Right lobe of liver (tissue), 6 donors: ENCODE measurements at regions of chr17 and their contacts with region 1.

Region 1: DNA sequence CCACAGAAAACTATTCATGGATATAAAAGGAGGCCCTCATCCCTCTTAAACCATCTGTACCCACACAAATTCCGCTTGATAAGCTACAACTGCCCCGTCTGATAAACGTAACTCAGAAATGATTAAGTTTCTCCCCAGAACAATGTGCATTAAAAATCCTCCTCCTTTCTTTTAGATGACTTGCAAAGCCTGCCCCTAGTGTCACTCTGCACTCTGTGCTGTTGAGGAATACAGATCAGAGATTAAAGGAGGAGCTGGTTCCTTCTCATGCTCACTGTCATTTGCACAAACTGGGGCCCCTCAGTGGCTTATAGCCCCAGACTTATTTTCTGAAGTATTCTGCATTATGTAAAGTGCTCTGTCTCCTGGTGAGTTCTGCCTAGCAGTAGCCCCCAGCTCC is 33.3 kb downstream of the CDRT15 start:
- DNase-seq: no peak
- ATAC-seq: no peak
- H3K4me3 ChIP-seq: no peak overlapping the region
- H3K27ac ChIP-seq: no peak overlapping the region
- H3K4me1 ChIP-seq: peaks cover 0 to 10% (median 4%) of the 10 kb centered on the region in 4 donors
- H3K27me3 ChIP-seq: no peaks in the 10 kb centered on the region
- CTCF ChIP-seq: peak in 1 of 4 donors; percentile 17
- POLR2A ChIP-seq: no peak

Region 2: DNA sequence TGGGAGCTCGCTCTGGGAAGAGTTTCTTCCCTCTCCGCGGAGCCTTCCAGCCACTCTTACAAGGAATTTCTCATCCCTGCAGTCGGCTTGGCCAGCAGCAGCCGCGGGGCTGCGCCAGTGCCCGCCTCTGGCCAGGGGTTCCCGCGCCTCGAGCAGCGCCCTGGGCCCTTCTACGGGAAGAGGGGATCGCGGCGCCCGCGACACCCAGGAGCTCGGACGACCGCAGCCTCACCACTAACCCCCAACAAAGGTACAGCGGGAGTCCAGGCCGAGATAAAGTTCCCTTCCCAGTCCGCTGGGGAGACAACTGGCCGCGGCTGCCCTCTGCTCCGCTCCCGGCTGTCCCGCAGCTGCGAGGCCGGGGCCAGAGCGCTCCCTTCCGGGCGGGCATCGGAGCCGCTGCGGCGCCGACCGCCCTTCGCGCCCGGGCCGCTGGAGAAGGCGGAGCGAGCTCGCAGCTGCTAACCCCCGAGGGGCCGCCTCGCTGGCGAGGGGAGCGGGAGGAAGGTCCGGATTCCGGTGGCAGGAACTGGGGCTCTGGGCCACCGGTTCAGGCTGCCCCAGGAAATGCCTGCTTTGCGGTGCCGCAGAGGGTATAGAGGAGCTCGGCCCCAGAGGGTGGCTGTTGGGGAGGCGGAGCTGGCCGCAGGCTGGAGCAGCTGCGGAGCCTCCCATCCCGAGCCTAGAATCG is 93.9 kb after region 1 on chr17:
- intact Hi-C with region 1: loop called in 1 of 2 experiments (anchors 10 kb)
- DNase-seq: peak; percentile 70 to 75 (median 72)
- ATAC-seq: peak; percentile 34 to 54 (median 46)
- H3K4me3 ChIP-seq: peak overlapping the region; percentile 46 to 57 (median 56)
- H3K27ac ChIP-seq: peak overlapping the region; percentile 48 to 77 (median 61)
- H3K4me1 ChIP-seq: peaks cover 0 to 4% (median 0%) of the 10 kb centered on the region in 4 donors
- H3K27me3 ChIP-seq: no peaks in the 10 kb centered on the region
- CTCF ChIP-seq: peak; percentile 33 to 60 (median 43)
- POLR2A ChIP-seq: peak; percentile 45

Region 3: GRCh38 chr17:14396547-14396946 is 193.2 kb after region 1 on chr17:
- intact Hi-C with region 1: no loop called
- DNase-seq: no peak
- ATAC-seq: no peak
- H3K4me3 ChIP-seq: no peak overlapping the region
- H3K27ac ChIP-seq: no peak overlapping the region
- H3K4me1 ChIP-seq: no peaks in the 10 kb centered on the region
- H3K27me3 ChIP-seq: no peaks in the 10 kb centered on the region
- CTCF ChIP-seq: no peak
- POLR2A ChIP-seq: no peak